ENCODE measurements at regions of chr1 and their contacts with region 1.

Region 1: DNA sequence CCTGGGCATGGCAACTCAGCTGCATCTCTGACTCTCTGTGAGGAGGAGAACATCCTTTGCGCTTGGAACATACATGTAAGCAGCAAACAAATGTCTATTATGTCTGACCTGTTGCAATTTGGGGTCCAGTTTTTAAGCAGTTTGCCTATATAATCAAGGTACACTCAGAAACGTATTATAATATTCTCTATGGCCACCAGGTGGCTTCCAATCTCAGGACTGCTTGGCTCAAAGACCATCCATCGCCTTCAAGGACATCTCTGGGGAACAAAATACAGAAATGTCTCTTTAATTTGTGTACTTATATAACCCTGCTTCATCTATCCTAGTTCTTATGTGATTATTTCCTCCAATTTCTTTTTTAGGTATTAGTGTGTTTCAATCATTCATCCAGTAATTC is 227.2 kb downstream of the OLFM3 start:
- DNase-seq: no peak
- H3K4me3 ChIP-seq: no peak overlapping the region
- H3K27ac ChIP-seq: no peak overlapping the region
- H3K4me1 ChIP-seq: no peaks in the 10 kb centered on the region
- H3K27me3 ChIP-seq: no peaks in the 10 kb centered on the region
- CTCF ChIP-seq: peak in 4 of 5 experiments; percentile 18 to 29 (median 26)
- EP300 ChIP-seq: no peak
- POLR2A ChIP-seq: no peak

Region 2: GRCh38 chr1:102640872-102641271 is 871.4 kb after region 1 on chr1:
- in situ Hi-C with region 1: no loop called
- intact Hi-C with region 1: loop called (anchors 10 kb)
- DNase-seq: no peak
- H3K4me3 ChIP-seq: no peak overlapping the region
- H3K27ac ChIP-seq: no peak overlapping the region
- H3K4me1 ChIP-seq: no peaks in the 10 kb centered on the region
- H3K27me3 ChIP-seq: no peaks in the 10 kb centered on the region
- CTCF ChIP-seq: no peak
- EP300 ChIP-seq: no peak
- POLR2A ChIP-seq: no peak

Region 3: GRCh38 chr1:102861247-102861646 is 1091.7 kb after region 1 on chr1:
- in situ Hi-C with region 1: no loop called
- intact Hi-C with region 1: loop called (anchors 10 kb)
- DNase-seq: no peak
- H3K4me3 ChIP-seq: no peak overlapping the region
- H3K27ac ChIP-seq: no peak overlapping the region
- H3K4me1 ChIP-seq: no peaks in the 10 kb centered on the region
- H3K27me3 ChIP-seq: no peaks in the 10 kb centered on the region
- CTCF ChIP-seq: no peak
- EP300 ChIP-seq: no peak
- POLR2A ChIP-seq: no peak